ENCODE measurements at regions of chr19 and their contacts with region 1.

Region 1: GRCh38 chr19:40549007-40549708 is 27.5 kb upstream of the SHKBP1 start:
- DNase-seq: peak in 1 of 2 experiments; percentile 68
- H3K4me3 ChIP-seq: peak overlapping the region; percentile 35; the same call in 1 of the 2 replicates
- H3K27ac ChIP-seq: no peak overlapping the region
- H3K4me1 ChIP-seq: no peaks in the 10 kb centered on the region
- H3K27me3 ChIP-seq: peaks cover 23% of the 10 kb centered on the region
- CTCF ChIP-seq: peak; percentile 60

Region 2: DNA sequence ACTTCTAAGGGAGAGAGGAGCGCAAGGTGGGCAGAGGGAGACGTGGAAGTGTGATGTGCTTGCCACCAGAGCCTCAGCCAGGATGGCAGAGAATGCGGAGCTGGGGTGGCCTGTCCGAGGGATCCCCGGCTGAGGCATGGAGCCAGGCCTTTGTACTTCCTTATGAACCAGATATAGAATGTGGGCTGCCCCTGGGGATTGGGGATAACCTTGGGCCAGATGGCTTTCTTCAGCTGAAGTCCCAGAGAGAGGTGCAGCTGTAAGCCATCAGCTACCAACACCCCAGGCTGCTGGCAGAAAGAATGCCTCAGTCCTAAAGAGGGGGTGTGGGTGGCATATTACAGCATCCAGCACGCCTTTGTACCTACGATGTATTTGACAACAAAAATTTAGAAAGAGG is 1548.1 kb before region 1 on chr19:
- CTCF ChIA-PET with region 1: interaction called, 12 read pairs
- POLR2A ChIA-PET with region 1: no interaction called
- intact Hi-C with region 1: no loop called
- DNase-seq: no peak
- H3K4me3 ChIP-seq: no peak overlapping the region
- H3K27ac ChIP-seq: no peak overlapping the region
- H3K4me1 ChIP-seq: no peaks in the 10 kb centered on the region
- H3K27me3 ChIP-seq: no peaks in the 10 kb centered on the region
- CTCF ChIP-seq: no peak

Region 3: GRCh38 chr19:40469011-40469410 is 80.1 kb before region 1 on chr19:
- CTCF ChIA-PET with region 1: no interaction called
- POLR2A ChIA-PET with region 1: no interaction called
- intact Hi-C with region 1: no loop called
- DNase-seq: no peak
- H3K4me3 ChIP-seq: no peak overlapping the region
- H3K27ac ChIP-seq: no peak overlapping the region
- H3K4me1 ChIP-seq: peaks cover 8% of the 10 kb centered on the region
- H3K27me3 ChIP-seq: no peaks in the 10 kb centered on the region
- CTCF ChIP-seq: no peak

Region 4: DNA sequence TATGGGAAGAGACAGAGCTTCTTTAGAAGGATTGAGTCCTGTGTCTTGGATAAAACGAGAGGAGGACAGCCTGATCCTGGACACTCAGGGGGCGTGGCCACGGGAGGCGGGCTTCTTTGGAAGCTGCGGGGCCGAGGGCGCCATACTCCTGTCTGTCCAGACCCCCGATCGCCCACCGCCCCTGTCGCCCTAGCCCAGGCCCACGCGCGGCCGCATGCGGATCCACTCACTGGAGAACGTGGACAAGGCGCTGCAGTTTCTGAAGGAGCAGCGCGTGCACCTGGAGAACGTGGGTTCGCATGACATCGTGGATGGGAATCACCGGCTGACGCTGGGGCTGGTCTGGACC is 59.3 kb before region 1 on chr19:
- CTCF ChIA-PET with region 1: no interaction called
- POLR2A ChIA-PET with region 1: interaction called, 17 read pairs
- intact Hi-C with region 1: no loop called
- DNase-seq: no peak
- H3K4me3 ChIP-seq: no peak overlapping the region
- H3K27ac ChIP-seq: no peak overlapping the region
- H3K4me1 ChIP-seq: no peaks in the 10 kb centered on the region
- H3K27me3 ChIP-seq: peaks cover 10% of the 10 kb centered on the region
- CTCF ChIP-seq: no peak

Region 5: GRCh38 chr19:40598121-40598917 is 49.2 kb after region 1 on chr19:
- CTCF ChIA-PET with region 1: no interaction called
- POLR2A ChIA-PET with region 1: no interaction called
- intact Hi-C with region 1: loop called (anchors 1 kb)
- DNase-seq: peak; percentile 60 to 89
- H3K4me3 ChIP-seq: no peak overlapping the region
- H3K27ac ChIP-seq: no peak overlapping the region
- H3K4me1 ChIP-seq: peaks cover 32% of the 10 kb centered on the region
- H3K27me3 ChIP-seq: peaks cover 35% of the 10 kb centered on the region
- CTCF ChIP-seq: peak; percentile 96

Region 6: DNA sequence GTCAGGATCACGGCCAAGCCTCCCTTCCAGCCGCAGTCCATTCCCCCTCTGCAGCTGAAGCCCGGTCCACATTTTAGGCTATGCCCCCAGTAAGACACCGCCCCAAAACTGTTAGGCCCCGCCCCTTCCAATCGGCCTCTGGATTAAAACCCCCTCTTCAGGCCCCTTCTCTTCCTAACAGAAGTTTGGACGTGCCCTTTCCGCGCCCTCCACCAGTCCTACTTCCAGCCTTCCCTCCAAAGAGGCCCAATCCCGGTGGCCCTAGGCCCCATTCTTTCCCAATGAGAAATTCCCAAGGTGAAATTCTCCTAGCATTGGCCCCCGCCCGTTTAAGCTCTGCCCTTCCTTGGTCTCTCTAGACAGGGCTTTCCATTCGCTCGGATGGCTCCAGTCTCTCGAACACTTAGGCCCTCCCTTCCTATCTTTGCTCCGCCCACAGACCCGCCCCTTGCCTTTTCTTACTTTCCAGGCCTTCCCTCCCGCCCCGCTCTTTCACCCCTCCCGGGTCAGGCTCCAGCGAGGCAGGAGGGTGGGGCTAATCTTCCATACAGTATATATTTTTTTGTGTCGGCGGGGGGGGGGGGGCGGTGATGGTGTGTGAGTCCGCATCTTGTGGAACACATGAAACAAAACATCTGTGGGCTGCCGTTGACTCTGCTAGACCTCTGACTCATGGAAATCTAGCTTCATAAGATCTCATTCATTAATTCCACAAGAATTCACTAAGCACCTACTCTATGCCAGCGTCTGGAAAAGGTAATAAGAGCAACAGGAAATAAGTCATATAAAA is 65.7 kb after region 1 on chr19:
- CTCF ChIA-PET with region 1: interaction called, 28 read pairs
- POLR2A ChIA-PET with region 1: interaction called, 6 read pairs
- intact Hi-C with region 1: no loop called
- DNase-seq: peak; percentile 83 to 91
- H3K4me3 ChIP-seq: peak overlapping the region; percentile 86
- H3K27ac ChIP-seq: peak overlapping the region; percentile 70
- H3K4me1 ChIP-seq: peaks cover 19% of the 10 kb centered on the region
- H3K27me3 ChIP-seq: no peaks in the 10 kb centered on the region
- CTCF ChIP-seq: no peak